Panc1 (cell line): ENCODE measurements at regions of chr18 and their contacts with region 1.

Region 1: GRCh38 chr18:78123144-78123909 is 856.3 kb upstream of the SALL3 start:
- DNase-seq: no peak
- ATAC-seq: no peak
- H3K4me3 ChIP-seq: no peak overlapping the region
- H3K27ac ChIP-seq: no peak overlapping the region
- H3K4me1 ChIP-seq: no peaks in the 10 kb centered on the region
- H3K27me3 ChIP-seq: no peaks in the 10 kb centered on the region
- CTCF ChIP-seq: no peak

Region 2: DNA sequence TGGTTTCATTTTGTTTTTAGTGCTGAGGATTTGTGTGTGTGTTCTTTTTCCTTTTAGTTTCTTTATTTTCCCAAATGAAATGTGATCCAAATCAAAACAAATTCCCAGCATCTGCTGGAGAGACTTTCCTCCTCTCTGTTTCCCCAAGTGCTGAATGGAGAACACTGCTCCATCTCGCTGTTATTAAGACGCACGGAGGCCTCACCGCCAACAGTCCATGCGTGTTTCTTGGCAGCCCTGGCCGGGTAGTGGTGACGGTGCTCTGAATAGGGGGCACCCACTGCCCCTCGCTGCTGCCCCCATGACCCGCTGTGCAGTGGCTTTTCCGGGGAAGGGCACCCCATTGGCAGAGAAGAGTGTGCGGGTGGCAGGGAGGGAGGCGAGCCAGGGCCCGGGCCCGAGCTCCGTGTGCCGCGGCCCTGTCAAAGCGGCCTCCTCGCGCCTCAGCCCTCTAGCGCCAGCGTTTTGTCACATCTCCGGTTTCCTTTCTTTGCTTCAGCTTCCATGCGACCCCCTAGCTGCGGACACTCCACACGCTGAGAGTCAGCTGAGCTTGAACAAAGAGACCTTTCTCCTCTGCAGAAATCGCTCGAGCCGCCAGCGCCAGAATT is 382.6 kb after region 1 on chr18:
- CTCF ChIA-PET with region 1: no interaction called
- POLR2A ChIA-PET with region 1: interaction called, 11 read pairs
- in situ Hi-C with region 1: no loop called
- intact Hi-C with region 1: no loop called
- DNase-seq: no peak
- ATAC-seq: 0 out of 2 replicates have a peak, but pooled peaks have one; percentile 32
- H3K4me3 ChIP-seq: no peak overlapping the region
- H3K27ac ChIP-seq: no peak overlapping the region
- H3K4me1 ChIP-seq: no peaks in the 10 kb centered on the region
- H3K27me3 ChIP-seq: no peaks in the 10 kb centered on the region
- CTCF ChIP-seq: no peak